ENCODE measurements at regions of chr3 and their contacts with region 1.

Region 1: GRCh38 chr3:159739886-159740453 is 248.7 kb upstream of the IL12A start:
- DNase-seq: no peak
- ATAC-seq: no peak
- H3K4me3 ChIP-seq: no peak overlapping the region
- H3K27ac ChIP-seq: no peak overlapping the region
- H3K4me1 ChIP-seq: no peaks in the 10 kb centered on the region
- H3K27me3 ChIP-seq: no peaks in the 10 kb centered on the region
- CTCF ChIP-seq: no peak
- POLR2A ChIP-seq: no peak

Region 2: GRCh38 chr3:159609625-159610024 is 130.3 kb before region 1 on chr3:
- intact Hi-C with region 1: loop called in 2 of 10 experiments (anchors 5 to 10 kb)
- DNase-seq: no peak
- ATAC-seq: no peak
- H3K4me3 ChIP-seq: no peak overlapping the region
- H3K27ac ChIP-seq: no peak overlapping the region
- H3K4me1 ChIP-seq: peaks cover 0 to 11% (median 0%) of the 10 kb centered on the region in 12 donors
- H3K27me3 ChIP-seq: no peaks in the 10 kb centered on the region
- CTCF ChIP-seq: no peak
- POLR2A ChIP-seq: no peak